A549 (cell line): ENCODE measurements at regions of chr17 and their contacts with region 1.

Region 1: DNA sequence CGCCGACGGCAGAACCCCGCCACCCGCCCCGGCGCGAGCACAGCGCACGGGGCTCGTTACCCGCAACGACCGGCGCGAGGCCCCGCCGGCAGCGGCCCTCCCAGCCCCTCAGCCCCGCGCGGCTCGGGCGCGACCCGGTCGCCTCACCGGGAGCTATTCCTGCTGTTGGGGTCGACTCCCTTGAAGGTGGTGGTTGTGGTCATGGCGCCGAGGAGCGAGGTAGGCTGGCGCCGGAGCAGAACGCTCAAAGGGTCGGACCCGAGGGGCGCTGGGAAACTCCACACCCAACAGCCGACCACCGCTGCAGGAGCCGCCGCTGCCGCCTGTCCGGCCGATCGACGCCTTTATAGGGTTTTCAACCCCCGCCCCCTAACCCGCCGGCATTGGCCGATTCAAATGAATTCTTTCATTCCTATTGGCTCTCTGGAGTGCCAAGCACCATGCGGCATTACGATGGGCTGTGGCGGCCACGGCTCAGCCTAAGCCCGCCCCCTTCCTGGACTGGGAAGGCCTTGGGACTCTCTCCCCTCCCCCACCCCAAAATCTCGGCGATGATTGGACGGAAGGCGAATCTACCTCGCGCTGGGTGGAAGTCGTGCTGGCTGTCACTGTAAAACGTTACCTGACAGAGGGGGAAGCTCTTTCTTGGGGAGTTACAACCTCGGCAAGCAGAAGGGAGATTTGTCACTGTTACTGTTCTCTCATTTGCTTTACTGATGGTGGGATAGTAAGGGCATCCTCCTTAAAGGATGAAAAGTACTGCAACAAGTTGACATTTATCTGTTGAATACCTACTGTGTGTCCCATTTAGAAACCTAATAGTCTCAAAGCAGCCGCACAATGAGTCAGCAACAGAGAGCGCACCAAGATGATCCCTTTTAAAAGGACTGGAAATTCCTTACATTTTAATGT is at the start of gene JPT1:
- DNase-seq: peak; percentile 99 to 100
- ATAC-seq: peak; percentile 85 to 94
- H3K4me3 ChIP-seq: peak within 1 kb of the TSS; percentile 78
- H3K27ac ChIP-seq: peak within 1 kb of the TSS; percentile 85 to 95
- H3K4me1 ChIP-seq: peaks cover 54% of the 10 kb centered on the region
- CTCF ChIP-seq: no peak
- EP300 ChIP-seq: no peak
- POLR2A ChIP-seq: peak; percentile 100
- RAD21 ChIP-seq: no peak
- polyA plus RNA-seq, gene JPT1: 141 and 196 TPM in 2 replicates

Region 2: GRCh38 chr17:75199886-75200618 is 45.6 kb after region 1 on chr17:
- CTCF ChIA-PET with region 1: interaction called, 11 read pairs
- POLR2A ChIA-PET with region 1: interaction called, 4 read pairs
- DNase-seq: no peak
- ATAC-seq: no peak
- H3K4me3 ChIP-seq: no peak overlapping the region
- H3K27ac ChIP-seq: no peak overlapping the region
- H3K4me1 ChIP-seq: peaks cover 4% of the 10 kb centered on the region; the same call in 1 of the 3 replicates
- CTCF ChIP-seq: no peak
- EP300 ChIP-seq: no peak
- POLR2A ChIP-seq: no peak
- RAD21 ChIP-seq: no peak

Region 3: GRCh38 chr17:75319904-75320691 is 165.6 kb after region 1 on chr17:
- CTCF ChIA-PET with region 1: no interaction called
- POLR2A ChIA-PET with region 1: no interaction called
- DNase-seq: no peak
- ATAC-seq: no peak
- H3K4me3 ChIP-seq: no peak overlapping the region
- H3K27ac ChIP-seq: no peak overlapping the region
- H3K4me1 ChIP-seq: no peaks in the 10 kb centered on the region
- CTCF ChIP-seq: no peak
- EP300 ChIP-seq: no peak
- POLR2A ChIP-seq: no peak
- RAD21 ChIP-seq: no peak

Region 4: GRCh38 chr17:75498726-75499213 is 344.3 kb after region 1 on chr17:
- CTCF ChIA-PET with region 1: no interaction called
- POLR2A ChIA-PET with region 1: no interaction called
- DNase-seq: peak in 1 of 2 experiments; percentile 44
- ATAC-seq: peak; percentile 11 to 26; a peak in 2 of 6 replicates
- H3K4me3 ChIP-seq: no peak overlapping the region
- H3K27ac ChIP-seq: no peak overlapping the region
- H3K4me1 ChIP-seq: no peaks in the 10 kb centered on the region
- CTCF ChIP-seq: no peak; the same call in 2 of the 3 replicates
- EP300 ChIP-seq: no peak
- POLR2A ChIP-seq: no peak
- RAD21 ChIP-seq: no peak